Stomach (tissue), 19 donors: ENCODE measurements at regions of chr17 and their contacts with region 1.

Region 1: DNA sequence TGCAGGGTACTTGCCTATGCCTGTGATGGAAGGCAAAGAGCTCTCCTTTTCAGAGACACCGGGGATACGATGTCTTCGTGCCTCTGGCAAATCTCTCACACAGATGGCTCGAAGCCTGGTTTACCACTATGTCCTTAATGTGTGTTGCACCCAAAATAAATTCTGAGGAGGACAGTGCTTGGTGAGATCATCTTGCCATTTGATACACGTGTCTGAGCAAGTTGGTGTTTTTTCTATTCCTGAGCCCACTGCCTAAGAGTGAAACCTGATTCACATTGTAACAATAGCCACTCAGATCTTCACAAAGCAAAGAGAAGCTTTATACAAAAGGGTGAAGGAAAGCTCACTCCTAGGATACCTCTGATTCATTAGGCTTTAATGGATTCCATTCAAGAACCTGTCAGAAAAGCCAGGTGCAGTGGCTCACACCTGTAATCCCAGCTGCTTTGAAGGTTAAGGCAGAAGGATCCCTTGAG is 33.1 kb upstream of the AKAP1 start:
- DNase-seq: peak in 1 of 2 donors; percentile 24
- H3K4me3 ChIP-seq: no peak overlapping the region
- H3K27ac ChIP-seq: no peak overlapping the region
- H3K4me1 ChIP-seq: peaks cover 7 to 13% (median 10%) of the 10 kb centered on the region in 4 donors
- H3K27me3 ChIP-seq: peaks cover 0 to 8% (median 0%) of the 10 kb centered on the region in 3 donors
- CTCF ChIP-seq: no peak
- EP300 ChIP-seq: no peak
- POLR2A ChIP-seq: no peak

Region 2: DNA sequence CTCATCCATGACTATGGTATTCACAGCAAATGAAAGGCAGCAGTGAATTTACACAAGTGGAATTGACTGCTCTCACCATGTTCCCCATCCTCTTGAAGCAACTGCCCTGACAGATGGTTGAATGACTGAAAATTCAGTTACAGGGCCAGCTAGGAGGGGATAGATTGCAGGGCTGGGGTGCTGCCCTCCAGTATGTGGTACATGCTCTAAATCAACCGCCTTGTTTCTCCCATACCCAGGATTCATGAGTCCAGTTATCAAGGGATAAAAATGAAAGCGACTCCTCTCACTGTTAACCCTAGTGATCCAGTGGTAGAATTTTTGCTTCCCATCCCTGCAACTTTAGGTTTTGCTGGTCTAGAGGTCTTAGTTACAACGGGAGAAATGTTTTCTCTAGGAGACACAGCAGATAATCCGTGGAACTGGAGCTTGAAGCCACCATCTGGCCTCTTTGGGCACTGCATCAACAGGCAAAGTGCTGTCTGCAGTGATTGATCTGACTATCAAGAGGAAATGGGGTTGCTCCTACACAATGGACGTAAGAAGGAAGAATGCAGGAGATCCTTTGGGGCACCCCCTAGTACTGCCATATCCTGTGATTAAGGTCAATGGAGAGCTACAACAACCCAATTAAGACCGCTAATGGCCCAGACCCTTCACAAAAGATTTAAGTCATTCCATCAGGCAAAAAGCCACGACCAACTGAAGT is 42.0 kb before region 1 on chr17:
- intact Hi-C with region 1: loop called (anchors 10 kb)
- DNase-seq: peak; percentile 69 to 80
- H3K4me3 ChIP-seq: no peak overlapping the region
- H3K27ac ChIP-seq: no peak overlapping the region
- H3K4me1 ChIP-seq: peaks cover 0 to 16% (median 8%) of the 10 kb centered on the region in 4 donors
- H3K27me3 ChIP-seq: no peaks in the 10 kb centered on the region
- CTCF ChIP-seq: peak in 5 of 7 experiments; percentile 62 to 74 (median 65)
- EP300 ChIP-seq: no peak
- POLR2A ChIP-seq: no peak